Esophagus muscularis mucosa (tissue), 4 donors: ENCODE measurements at regions of chr5 and their contacts with region 1.

Region 1: DNA sequence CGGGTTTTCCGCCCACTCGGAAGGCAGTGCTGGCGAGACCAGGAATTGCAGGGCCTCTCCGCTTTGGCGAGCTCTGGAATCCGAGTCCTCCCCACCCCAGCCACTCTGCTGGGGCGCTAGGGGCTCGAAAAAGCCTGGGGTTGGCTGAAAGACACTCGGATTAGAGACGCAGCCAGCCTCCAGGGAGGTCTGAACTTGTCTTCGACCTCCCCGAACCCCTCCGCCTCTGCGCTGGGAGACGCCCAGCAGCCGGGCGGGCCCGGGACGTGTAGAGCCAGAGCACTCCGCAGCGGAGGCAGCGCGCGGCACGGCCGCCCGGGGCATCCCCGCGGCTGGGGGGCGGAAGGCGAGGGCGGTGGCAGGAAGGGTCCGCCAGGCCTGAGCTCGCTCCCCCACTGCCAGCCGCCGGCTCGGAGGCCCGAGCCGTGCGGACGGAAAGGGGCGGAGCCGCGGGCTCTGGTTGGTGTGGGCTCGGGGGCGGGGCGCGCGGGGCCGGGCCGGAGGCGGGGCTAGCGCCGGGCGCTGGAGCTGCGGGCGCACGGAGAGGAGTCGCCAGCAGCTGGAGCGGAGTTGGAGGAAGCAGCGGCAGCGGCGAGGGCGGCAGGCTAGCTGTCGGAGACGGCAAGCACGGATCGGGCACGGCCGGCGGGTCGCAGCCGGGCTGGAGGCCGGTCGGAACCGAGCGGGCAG is at the start of gene PIK3R1:
- DNase-seq: peak; percentile 99
- H3K4me3 ChIP-seq: peak within 1 kb of the TSS; percentile 87 to 98 (median 94)
- H3K27ac ChIP-seq: peak within 1 kb of the TSS; percentile 93 to 98 (median 98)
- H3K4me1 ChIP-seq: peaks cover 6 to 31% (median 24%) of the 10 kb centered on the region in 4 donors
- H3K27me3 ChIP-seq: peaks cover 0 to 6% (median 0%) of the 10 kb centered on the region in 4 donors
- CTCF ChIP-seq: peak; percentile 31 to 68 (median 39)
- EP300 ChIP-seq: no peak
- POLR2A ChIP-seq: peak; percentile 69
- total RNA-seq, gene PIK3R1: 244 to 563 (median 329) TPM

Region 2: DNA sequence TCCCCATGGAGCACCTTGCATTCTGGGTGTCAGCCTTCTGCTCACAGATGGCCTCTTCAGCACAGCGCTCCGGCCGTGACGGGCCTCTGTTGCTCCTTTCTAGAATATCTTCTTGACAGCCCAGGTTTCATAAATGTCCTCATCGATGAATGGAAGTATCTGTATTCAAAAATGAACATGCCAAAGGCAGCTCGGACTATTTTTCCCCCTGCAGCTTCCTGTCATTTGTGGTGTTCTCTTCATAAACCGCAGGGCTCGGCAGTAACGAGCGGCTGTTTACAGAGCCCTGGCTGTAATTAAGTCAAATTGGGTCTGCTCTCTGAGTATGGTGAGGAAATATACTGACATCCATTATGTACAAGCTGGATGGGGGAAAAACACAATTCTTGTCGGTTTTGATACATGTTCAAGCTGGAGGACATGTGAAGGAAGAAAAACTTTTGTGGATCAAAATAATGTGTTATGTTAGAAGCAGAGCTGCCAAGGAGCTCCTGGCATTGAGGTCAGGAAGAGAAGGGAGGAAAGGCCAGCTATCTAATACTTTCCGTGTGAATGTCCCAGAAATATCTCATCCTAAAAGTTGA is 864.6 kb before region 1 on chr5:
- intact Hi-C with region 1: no loop called
- DNase-seq: no peak
- H3K4me3 ChIP-seq: peak overlapping the region in 1 of 4 donors; percentile 16
- H3K27ac ChIP-seq: peak overlapping the region; percentile 17 to 44 (median 27)
- H3K4me1 ChIP-seq: peaks cover 0 to 21% (median 13%) of the 10 kb centered on the region in 4 donors
- H3K27me3 ChIP-seq: no peaks in the 10 kb centered on the region
- CTCF ChIP-seq: no peak
- EP300 ChIP-seq: no peak
- POLR2A ChIP-seq: no peak

Region 3: DNA sequence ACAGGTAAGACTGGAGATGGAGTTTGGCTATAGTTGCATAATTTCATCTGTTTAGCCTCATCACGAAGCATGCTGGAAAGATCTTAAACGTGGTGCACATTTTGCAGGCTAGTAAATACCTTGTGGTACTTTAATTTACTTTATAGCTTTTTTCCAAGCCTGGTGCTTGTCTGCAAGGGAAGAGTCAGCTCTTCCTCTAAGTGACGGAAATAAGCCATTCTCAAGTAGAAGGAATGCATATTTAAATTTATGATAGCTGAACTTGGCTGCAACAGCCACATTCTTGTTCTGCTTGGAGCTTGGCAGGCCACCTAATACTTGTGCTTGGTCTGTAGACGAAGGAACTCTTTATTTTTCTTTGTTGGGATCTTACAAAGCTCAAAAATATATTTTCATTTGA is 187.8 kb before region 1 on chr5:
- intact Hi-C with region 1: loop called (anchors 5 kb)
- DNase-seq: no peak
- H3K4me3 ChIP-seq: no peak overlapping the region
- H3K27ac ChIP-seq: peak overlapping the region; percentile 66 to 80 (median 76)
- H3K4me1 ChIP-seq: peaks cover 28 to 53% (median 43%) of the 10 kb centered on the region in 4 donors
- H3K27me3 ChIP-seq: no peaks in the 10 kb centered on the region
- CTCF ChIP-seq: no peak
- EP300 ChIP-seq: peak; percentile 39
- POLR2A ChIP-seq: no peak

Region 4: DNA sequence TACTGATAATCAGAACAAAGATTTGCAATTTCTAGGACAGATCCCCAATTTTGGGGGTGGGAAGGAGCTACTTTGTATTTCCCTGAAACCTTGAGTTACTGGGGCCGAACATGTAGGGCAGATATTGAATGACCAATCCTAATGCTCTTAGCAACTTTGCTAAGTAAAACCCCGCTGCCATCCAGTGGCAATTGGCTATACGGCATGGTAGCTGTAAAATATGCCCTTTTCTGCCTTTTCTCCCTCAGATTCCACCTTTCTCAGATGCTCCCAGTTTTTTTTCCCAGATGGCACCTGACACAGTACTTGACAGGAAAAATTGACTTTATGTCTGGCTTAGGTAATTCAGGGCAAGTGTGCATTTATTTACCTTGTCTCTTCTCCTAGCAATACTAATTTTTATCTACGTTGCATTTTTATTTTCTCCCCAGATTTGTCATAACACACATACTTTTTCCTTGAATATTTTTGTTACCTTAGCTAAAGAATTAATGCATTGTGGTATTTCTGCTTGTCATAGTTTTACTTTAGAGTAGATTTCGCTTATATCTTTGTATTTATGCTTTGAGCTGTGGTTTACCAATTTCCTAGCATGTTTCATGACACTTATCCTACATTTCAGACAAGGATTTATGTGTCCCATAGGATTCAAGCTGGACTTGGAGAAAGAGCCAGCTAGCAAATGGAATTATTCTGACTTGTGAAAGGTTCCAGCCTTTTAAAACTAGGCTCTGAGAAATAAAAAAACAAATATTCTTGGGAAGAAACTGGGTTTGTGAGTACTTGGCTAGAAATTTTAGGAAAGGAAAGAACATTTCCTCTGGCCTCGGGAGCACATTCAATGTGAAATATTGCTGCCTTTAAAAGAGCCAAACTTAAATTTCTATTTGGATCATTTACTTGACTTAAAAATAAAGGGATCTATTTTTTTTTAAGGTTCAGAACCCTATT is 37.6 kb after region 1 on chr5:
- intact Hi-C with region 1: loop called (anchors 5 kb)
- DNase-seq: no peak
- H3K4me3 ChIP-seq: peak overlapping the region; percentile 33 to 45 (median 42)
- H3K27ac ChIP-seq: peak overlapping the region; percentile 74 to 82 (median 78)
- H3K4me1 ChIP-seq: peaks cover 87 to 100% (median 100%) of the 10 kb centered on the region in 4 donors
- H3K27me3 ChIP-seq: no peaks in the 10 kb centered on the region
- CTCF ChIP-seq: peak; percentile 68 to 77 (median 74)
- EP300 ChIP-seq: no peak
- POLR2A ChIP-seq: no peak

Region 5: DNA sequence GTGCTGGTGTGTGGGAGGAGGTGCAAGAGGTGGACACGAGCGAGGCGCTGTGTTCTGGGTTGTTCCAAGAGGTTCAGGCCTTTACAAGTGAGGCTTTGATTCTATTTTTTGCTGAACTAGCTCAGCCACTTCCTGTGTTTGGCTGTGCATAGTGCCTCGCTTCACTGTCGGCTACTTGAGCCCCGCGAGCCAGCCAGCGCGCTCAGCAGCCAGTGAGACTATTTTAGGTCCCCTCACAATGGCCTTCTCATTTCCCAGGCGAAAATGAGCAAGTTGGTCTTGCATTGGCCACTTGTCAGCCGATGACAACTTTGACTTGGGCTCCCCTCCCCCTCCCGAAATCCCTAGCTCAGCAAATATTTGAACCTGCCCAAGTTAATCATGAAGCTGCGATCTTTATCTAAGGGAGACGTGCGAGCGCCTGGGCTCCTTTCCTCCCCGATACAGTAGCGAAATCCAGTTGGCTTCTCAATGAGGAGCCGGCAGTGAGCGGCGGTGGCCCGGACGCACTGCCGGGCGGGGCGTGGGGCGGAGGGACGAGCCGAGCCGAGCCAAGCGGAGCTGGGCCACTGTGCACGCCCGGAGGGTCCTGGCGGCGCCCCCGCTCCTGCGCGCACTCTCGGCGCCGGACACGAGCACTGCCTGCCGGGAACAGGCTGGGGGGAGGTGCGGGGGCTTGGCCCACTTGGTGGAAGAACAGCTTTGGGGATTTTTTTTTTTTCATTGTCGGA is 72.8 kb after region 1 on chr5:
- intact Hi-C with region 1: loop called (anchors 5 kb)
- DNase-seq: no peak
- H3K4me3 ChIP-seq: peak overlapping the region; percentile 54 to 62 (median 56)
- H3K27ac ChIP-seq: peak overlapping the region; percentile 80 to 89 (median 86)
- H3K4me1 ChIP-seq: peaks cover 66 to 100% (median 100%) of the 10 kb centered on the region in 4 donors
- H3K27me3 ChIP-seq: no peaks in the 10 kb centered on the region
- CTCF ChIP-seq: no peak
- EP300 ChIP-seq: no peak
- POLR2A ChIP-seq: no peak

Region 6: GRCh38 chr5:68378204-68378824 is 163.0 kb after region 1 on chr5:
- intact Hi-C with region 1: no loop called
- DNase-seq: peak; percentile 83
- H3K4me3 ChIP-seq: no peak overlapping the region
- H3K27ac ChIP-seq: no peak overlapping the region
- H3K4me1 ChIP-seq: peaks cover 0 to 10% (median 6%) of the 10 kb centered on the region in 4 donors
- H3K27me3 ChIP-seq: no peaks in the 10 kb centered on the region
- CTCF ChIP-seq: no peak
- EP300 ChIP-seq: no peak
- POLR2A ChIP-seq: no peak

Region 7: DNA sequence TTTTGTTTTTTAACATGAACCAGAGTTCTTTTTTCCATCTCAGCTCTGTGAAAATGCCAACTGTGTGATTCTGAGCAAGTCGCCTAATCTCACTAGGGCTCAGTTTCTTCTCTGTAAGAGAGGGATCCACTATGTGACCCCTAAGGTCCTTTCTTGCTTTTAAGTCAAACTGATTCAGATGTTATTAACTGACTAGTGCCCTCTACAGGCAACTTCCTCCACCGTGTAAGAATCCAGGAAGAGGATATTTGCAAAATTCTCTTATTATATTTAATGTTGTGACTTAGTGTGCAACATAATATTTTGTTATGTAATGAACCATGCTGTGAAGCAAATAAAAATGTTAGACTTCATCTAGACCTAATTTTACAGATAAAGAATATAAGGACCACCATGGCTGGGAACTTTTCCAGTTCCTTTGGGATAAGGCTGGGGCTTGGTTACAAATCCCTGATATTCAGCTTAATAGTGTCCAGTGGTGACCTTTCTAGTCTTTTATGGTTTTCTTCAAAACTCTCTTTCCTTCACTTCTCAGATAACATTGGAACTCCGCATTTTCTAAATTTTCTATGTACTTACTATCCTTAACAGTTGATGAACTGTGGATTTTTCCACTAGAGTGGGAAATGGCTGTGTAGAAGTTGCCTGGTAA is 244.9 kb after region 1 on chr5:
- intact Hi-C with region 1: loop called (anchors 2 kb)
- DNase-seq: no peak
- H3K4me3 ChIP-seq: no peak overlapping the region
- H3K27ac ChIP-seq: no peak overlapping the region
- H3K4me1 ChIP-seq: peaks cover 9 to 33% (median 22%) of the 10 kb centered on the region in 4 donors
- H3K27me3 ChIP-seq: no peaks in the 10 kb centered on the region
- CTCF ChIP-seq: peak; percentile 42 to 70 (median 61)
- EP300 ChIP-seq: no peak
- POLR2A ChIP-seq: no peak